GM12878 (cell line): ENCODE measurements at regions of chr3 and their contacts with region 1.

Region 1: GRCh38 chr3:59235634-59236012 is 185.8 kb upstream of the CFAP20DC start:
- DNase-seq: peak; percentile 46
- ATAC-seq: peak; percentile 94
- H3K4me3 ChIP-seq: no peak overlapping the region
- H3K27ac ChIP-seq: no peak overlapping the region
- H3K4me1 ChIP-seq: peaks cover 3% of the 10 kb centered on the region
- H3K27me3 ChIP-seq: no peaks in the 10 kb centered on the region
- CTCF ChIP-seq: no peak
- EP300 ChIP-seq: peak; percentile 56 to 81; a peak in 3 of 4 replicates
- POLR2A ChIP-seq: no peak
- RAD21 ChIP-seq: no peak

Region 2: GRCh38 chr3:59163953-59164352 is 71.7 kb before region 1 on chr3:
- CTCF ChIA-PET with region 1: no interaction called
- POLR2A ChIA-PET with region 1: no interaction called
- RAD21 ChIA-PET with region 1: no interaction called
- SMC1A ChIA-PET with region 1: no interaction called
- in situ Hi-C with region 1: no loop called
- intact Hi-C with region 1: no loop called
- DNase-seq: no peak
- ATAC-seq: no peak
- H3K4me3 ChIP-seq: no peak overlapping the region
- H3K27ac ChIP-seq: no peak overlapping the region
- H3K4me1 ChIP-seq: no peaks in the 10 kb centered on the region
- H3K27me3 ChIP-seq: no peaks in the 10 kb centered on the region; a peak in 1 of 4 replicates
- CTCF ChIP-seq: no peak
- EP300 ChIP-seq: no peak
- POLR2A ChIP-seq: no peak
- RAD21 ChIP-seq: no peak

Region 3: GRCh38 chr3:59262076-59262498 is 26.5 kb after region 1 on chr3:
- CTCF ChIA-PET with region 1: interaction called, 4 read pairs
- POLR2A ChIA-PET with region 1: interaction called, 4 read pairs
- RAD21 ChIA-PET with region 1: interaction called, 13 read pairs
- SMC1A ChIA-PET with region 1: interaction called, 23 read pairs
- in situ Hi-C with region 1: no loop called
- intact Hi-C with region 1: no loop called
- DNase-seq: peak; percentile 69
- ATAC-seq: peak; percentile 95
- H3K4me3 ChIP-seq: no peak overlapping the region
- H3K27ac ChIP-seq: no peak overlapping the region
- H3K4me1 ChIP-seq: peaks cover 3% of the 10 kb centered on the region; the same call in 1 of the 2 replicates
- H3K27me3 ChIP-seq: no peaks in the 10 kb centered on the region
- CTCF ChIP-seq: no peak
- EP300 ChIP-seq: peak in 1 of 2 experiments; percentile 47; a peak in 1 of 4 replicates
- POLR2A ChIP-seq: no peak
- RAD21 ChIP-seq: no peak

Region 4: DNA sequence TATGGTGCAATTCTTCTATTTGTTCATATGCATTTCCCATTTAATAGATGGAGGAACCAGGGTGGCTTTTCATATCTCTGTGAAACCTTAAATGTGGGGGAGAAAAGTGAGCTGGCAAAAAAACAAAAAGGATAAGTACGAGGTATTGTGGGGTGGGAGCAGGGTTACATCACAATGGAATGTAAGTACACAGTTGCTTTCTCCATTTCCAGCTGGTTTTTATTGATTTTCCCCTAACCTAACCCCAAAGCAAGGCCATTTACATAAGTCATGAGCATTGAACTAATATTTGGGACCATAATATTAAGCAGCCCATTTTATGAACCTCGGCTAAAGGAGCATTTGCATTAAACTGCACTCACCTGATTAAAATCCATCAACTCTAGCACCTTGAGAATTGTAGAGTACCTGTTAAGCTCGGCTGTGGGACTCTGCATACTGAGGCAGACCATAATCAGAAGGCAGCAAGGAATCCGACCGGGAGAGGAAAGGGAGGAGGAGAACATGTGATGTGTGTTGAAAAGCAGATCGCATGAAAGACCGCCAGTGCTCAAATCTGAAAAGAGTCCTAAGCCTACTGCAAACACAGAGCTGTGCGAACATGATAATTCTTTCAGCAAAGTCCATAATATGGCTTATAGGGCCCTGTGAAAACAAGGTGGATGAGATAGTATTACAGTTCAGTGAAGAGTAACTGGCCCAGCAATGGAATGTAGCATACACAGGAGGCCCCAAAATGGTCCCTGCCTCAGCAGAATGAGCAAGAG is 1502.2 kb after region 1 on chr3:
- CTCF ChIA-PET with region 1: no interaction called
- POLR2A ChIA-PET with region 1: no interaction called
- RAD21 ChIA-PET with region 1: no interaction called
- SMC1A ChIA-PET with region 1: no interaction called
- in situ Hi-C with region 1: no loop called
- intact Hi-C with region 1: no loop called
- DNase-seq: no peak
- ATAC-seq: no peak
- H3K4me3 ChIP-seq: no peak overlapping the region
- H3K27ac ChIP-seq: no peak overlapping the region
- H3K4me1 ChIP-seq: no peaks in the 10 kb centered on the region
- H3K27me3 ChIP-seq: no peaks in the 10 kb centered on the region
- CTCF ChIP-seq: no peak
- EP300 ChIP-seq: no peak
- POLR2A ChIP-seq: no peak
- RAD21 ChIP-seq: no peak